Activated CD4-positive, alpha-beta T cell treated with anti-CD3 and anti-CD28 coated beads for 36 hours (primary cell): ENCODE measurements at regions of chrX and their contacts with region 1.

Region 1: GRCh38 chrX:118807151-118808017 is 16.2 kb upstream of the ZCCHC12 start:
- DNase-seq: peak; percentile 61
- ATAC-seq: no peak
- H3K4me3 Mint-ChIP-seq: no peak overlapping the region
- H3K27ac Mint-ChIP-seq: no peak overlapping the region
- H3K4me1 Mint-ChIP-seq: no peaks in the 10 kb centered on the region
- H3K27me3 Mint-ChIP-seq: no peaks in the 10 kb centered on the region

Region 2: DNA sequence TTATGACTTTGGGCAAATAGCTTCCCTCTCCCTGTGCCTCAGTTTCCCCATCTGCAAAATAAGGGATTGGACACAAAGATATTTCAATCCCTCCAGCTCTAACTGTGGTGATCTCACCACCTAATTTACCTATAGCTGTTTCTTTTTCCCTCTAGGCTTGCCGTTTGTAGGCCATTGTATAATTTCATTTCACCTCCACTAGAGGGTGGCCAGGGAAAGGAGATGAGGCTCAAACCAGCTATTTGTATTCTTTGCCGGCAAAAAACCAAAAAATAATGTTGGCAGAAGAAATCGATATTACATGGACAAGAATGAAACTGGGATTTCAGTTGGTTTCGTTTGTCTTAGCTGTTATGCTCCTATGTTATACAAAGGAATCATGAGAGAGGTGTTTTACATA is 347.9 kb before region 1 on chrX:
- CTCF ChIA-PET with region 1: no interaction called
- POLR2A ChIA-PET with region 1: no interaction called
- intact Hi-C with region 1: loop called in 1 of 2 experiments (anchors 1 kb)
- DNase-seq: peak; percentile 34
- ATAC-seq: peak; percentile 66
- H3K4me3 Mint-ChIP-seq: no peak overlapping the region
- H3K27ac Mint-ChIP-seq: no peak overlapping the region
- H3K4me1 Mint-ChIP-seq: no peaks in the 10 kb centered on the region
- H3K27me3 Mint-ChIP-seq: no peaks in the 10 kb centered on the region

Region 3: DNA sequence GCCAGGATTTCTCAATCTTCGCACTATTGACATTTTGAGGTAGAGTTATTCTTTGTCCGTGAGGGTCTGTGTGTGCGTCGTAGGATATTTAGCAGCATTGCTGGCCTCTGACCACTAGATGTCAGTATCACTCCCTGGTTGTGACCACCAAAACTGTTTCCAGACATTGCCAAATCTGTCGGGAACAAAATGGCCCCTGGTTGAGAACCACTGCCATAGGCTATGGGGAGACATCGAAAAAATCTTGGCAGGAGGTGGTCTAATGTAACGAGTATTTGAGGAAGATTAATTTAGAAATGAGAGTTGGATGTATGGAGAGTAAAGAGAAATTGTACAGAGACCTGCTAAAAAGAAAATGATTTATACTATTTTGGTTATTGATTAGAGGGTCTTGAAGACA is 203.4 kb before region 1 on chrX:
- CTCF ChIA-PET with region 1: interaction called, 4 read pairs
- POLR2A ChIA-PET with region 1: no interaction called
- intact Hi-C with region 1: loop called (anchors 1 kb)
- DNase-seq: peak; percentile 38
- ATAC-seq: peak; percentile 64
- H3K4me3 Mint-ChIP-seq: no peak overlapping the region
- H3K27ac Mint-ChIP-seq: no peak overlapping the region
- H3K4me1 Mint-ChIP-seq: peaks cover 17% of the 10 kb centered on the region
- H3K27me3 Mint-ChIP-seq: no peaks in the 10 kb centered on the region

Region 4: GRCh38 chrX:118627084-118627758 is 180.2 kb before region 1 on chrX:
- CTCF ChIA-PET with region 1: interaction called, 9 read pairs
- POLR2A ChIA-PET with region 1: no interaction called
- intact Hi-C with region 1: loop called (anchors 5 to 10 kb)
- DNase-seq: no peak
- ATAC-seq: peak; percentile 47
- H3K4me3 Mint-ChIP-seq: no peak overlapping the region
- H3K27ac Mint-ChIP-seq: no peak overlapping the region
- H3K4me1 Mint-ChIP-seq: no peaks in the 10 kb centered on the region
- H3K27me3 Mint-ChIP-seq: no peaks in the 10 kb centered on the region

Region 5: DNA sequence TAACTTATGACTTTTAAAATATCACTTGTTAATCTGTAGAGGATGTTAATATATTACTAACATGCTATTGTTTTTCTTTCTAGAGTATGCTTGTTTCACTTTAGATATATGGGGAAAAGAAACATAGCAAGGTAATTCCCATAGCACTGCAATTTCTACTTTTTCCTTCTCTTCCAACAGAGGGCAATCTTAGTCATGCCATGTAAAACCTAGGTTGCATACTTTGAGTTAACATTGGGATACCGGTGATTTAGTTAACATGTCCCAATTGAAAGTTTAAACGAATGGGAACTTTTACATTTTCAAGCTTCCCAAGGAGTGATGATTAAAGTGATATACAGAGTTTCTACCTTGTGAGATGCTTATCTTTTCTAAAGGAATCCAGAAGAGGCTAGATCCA is 169.4 kb before region 1 on chrX:
- CTCF ChIA-PET with region 1: interaction called, 3 read pairs
- POLR2A ChIA-PET with region 1: no interaction called
- intact Hi-C with region 1: loop called in 1 of 2 experiments (anchors 10 kb)
- DNase-seq: no peak
- ATAC-seq: no peak
- H3K4me3 Mint-ChIP-seq: no peak overlapping the region
- H3K27ac Mint-ChIP-seq: no peak overlapping the region
- H3K4me1 Mint-ChIP-seq: peaks cover 3% of the 10 kb centered on the region
- H3K27me3 Mint-ChIP-seq: no peaks in the 10 kb centered on the region

Region 6: DNA sequence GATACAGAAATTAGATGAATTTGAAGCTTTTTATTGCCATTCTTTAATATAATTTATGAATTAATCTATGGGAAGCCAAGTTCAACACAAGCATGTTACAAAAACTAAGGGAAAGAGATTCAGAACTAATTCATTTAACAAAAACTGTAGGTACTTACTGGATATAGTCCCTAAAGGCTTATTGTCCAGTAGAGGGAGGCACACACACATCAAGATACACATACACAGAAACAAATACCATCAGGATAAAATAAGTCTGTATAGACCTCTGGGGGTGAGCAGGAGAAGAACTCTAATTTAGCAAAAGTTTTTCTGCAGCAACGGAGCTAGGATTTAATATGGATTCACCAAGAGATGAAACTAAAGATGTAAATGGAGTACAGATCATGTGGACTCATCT is 163.0 kb before region 1 on chrX:
- CTCF ChIA-PET with region 1: interaction called, 3 read pairs
- POLR2A ChIA-PET with region 1: no interaction called
- intact Hi-C with region 1: loop called (anchors 1 to 10 kb)
- DNase-seq: no peak
- ATAC-seq: no peak
- H3K4me3 Mint-ChIP-seq: no peak overlapping the region
- H3K27ac Mint-ChIP-seq: no peak overlapping the region
- H3K4me1 Mint-ChIP-seq: no peaks in the 10 kb centered on the region
- H3K27me3 Mint-ChIP-seq: no peaks in the 10 kb centered on the region

Region 7: GRCh38 chrX:118761939-118762707 is 45.3 kb before region 1 on chrX:
- CTCF ChIA-PET with region 1: no interaction called
- POLR2A ChIA-PET with region 1: no interaction called
- intact Hi-C with region 1: loop called (anchors 1 to 2 kb)
- DNase-seq: peak; percentile 6
- ATAC-seq: no peak
- H3K4me3 Mint-ChIP-seq: no peak overlapping the region
- H3K27ac Mint-ChIP-seq: no peak overlapping the region
- H3K4me1 Mint-ChIP-seq: no peaks in the 10 kb centered on the region
- H3K27me3 Mint-ChIP-seq: no peaks in the 10 kb centered on the region